IMR-90 (cell line): ENCODE measurements at regions of chr16 and their contacts with region 1.

Region 1: DNA sequence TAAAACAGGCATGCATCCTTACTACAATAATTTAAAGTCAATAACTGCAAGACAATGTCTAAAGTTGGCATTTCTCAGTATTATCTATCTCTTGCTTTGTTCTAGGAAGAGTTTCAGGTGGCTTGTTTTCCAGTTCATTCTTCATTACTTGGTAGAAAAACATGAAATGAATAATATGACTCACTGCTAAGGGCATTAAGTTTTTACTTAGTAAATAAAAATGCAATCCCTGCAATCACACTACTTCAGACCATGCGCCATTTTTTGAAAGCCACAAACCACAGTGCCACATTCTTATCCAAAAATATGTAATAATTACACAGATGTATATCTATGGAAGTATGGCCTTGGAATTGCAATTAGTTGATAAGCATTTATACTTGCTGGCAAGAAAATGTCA is 55.4 kb downstream of the CREBBP start:
- DNase-seq: peak; percentile 45
- ATAC-seq: peak; percentile 60
- H3K4me3 ChIP-seq: no peak overlapping the region
- H3K27ac ChIP-seq: no peak overlapping the region
- H3K4me1 ChIP-seq: peaks cover 39% of the 10 kb centered on the region
- H3K27me3 ChIP-seq: no peaks in the 10 kb centered on the region
- CTCF ChIP-seq: no peak
- POLR2A ChIP-seq: no peak
- RAD21 ChIP-seq: no peak

Region 2: DNA sequence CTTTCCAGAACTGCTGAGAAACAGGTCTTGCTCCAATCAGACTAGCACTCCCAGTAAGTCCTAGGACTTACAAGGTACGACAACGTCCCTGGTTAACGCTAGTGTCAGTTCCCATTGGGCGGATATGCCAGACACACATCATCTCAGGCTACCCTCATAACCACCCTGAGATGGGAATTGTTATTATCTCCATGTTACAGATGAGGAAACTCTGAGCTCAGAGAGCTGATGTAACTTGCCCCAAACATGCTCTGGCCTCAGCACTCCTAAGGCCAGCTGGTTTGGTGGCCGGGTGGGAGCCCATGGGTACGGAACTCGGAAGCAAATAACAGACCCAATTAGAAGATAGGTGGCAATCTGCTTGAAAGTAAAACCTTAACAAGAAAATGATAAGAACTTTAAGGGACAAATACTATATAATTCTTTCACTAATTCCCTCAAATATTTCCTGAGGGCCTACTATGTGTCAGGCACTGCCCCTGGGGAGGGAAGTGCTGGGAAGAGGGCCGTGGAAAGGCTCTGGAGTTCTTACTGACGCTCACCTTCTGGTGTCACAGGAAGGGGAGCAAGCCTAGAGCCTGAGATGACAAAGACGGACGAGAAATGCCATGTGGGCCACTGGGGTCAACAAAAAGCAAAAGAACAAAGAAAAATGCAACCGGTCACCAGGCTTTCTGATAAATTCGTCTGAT is 48.5 kb after region 1 on chr16:
- CTCF ChIA-PET with region 1: no interaction called
- POLR2A ChIA-PET with region 1: no interaction called
- dilution Hi-C with region 1: no loop called
- in situ Hi-C with region 1: no loop called
- intact Hi-C with region 1: loop called (anchors 5 kb)
- DNase-seq: peak; percentile 28
- ATAC-seq: no peak
- H3K4me3 ChIP-seq: no peak overlapping the region
- H3K27ac ChIP-seq: no peak overlapping the region
- H3K4me1 ChIP-seq: peaks cover 40% of the 10 kb centered on the region
- H3K27me3 ChIP-seq: no peaks in the 10 kb centered on the region
- CTCF ChIP-seq: no peak
- POLR2A ChIP-seq: no peak
- RAD21 ChIP-seq: no peak